Head of caudate nucleus (tissue), 42 donors: ENCODE measurements at regions of chr10 and their contacts with region 1.

Region 1: DNA sequence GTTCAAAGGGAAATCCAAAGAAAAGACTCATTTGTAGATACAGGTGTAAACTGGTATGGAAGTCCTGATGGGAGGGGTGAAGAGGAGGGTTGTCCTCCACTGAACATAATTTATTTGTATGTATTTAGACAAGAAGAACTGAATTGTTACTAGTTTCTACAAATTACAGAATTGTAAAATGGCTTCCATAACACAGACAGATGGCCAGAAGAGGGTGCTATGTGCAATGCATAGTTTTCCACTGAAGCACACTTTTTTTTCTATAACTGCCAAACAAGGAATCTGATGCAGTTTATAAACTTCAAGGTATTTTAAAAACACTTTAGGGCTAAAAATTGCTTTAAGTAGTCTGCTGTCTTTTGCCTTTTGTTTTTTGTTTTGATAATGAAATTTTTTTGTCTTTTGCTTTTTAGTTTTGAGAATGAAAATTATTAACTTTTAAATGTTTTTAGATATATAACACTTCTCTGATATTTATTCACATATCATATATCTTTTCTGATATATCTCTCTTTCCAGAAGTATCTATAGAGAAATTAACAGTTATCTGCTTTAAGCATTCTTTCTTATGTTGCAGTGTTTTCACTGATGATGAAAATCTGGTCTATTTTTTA is 58.5 kb downstream of the PHYHIPL start:
- DNase-seq: peak in 18 of 42 donors; percentile 8 to 74 (median 38)

Region 2: DNA sequence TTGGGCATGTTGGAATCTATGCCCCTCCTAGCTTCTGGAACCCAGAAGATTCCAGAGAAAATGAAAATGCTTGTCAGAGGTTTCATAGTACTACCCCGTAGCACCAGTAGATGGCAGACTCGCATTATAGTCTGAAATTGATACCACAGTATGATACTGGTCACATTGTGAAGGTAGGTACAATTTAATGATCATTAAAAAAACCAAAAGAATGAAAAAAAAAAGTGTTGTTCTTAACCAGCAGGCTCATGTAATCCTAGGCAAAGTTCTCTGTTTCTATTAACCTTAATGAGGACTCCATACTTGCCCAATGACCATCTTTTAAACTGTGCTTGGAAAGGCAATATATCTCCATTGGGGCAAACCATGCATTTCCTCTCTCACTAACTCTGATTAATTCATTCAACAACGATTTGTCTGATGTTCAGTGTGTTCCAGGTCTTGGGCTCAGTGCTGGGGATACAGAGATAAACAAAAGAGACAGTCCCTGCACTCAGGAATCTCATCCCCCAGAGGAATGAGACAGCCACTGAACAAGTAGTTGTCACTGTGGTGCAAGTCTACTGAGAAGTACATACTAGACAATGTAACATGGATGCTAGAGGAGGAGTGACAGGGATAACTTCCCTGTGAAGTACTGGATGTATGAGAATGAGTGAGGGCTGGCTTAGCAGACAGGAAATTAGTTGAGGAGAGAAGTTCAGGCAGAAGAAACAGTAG is 282.0 kb before region 1 on chr10:
- intact Hi-C with region 1: loop called (anchors 5 kb)
- DNase-seq: peak in 34 of 42 donors; percentile 31 to 93 (median 69)